Ascending aorta (tissue), 2 donors: ENCODE measurements at regions of chr7 and their contacts with region 1.

Region 1: GRCh38 chr7:141737834-141738591 is at the start of gene SSBP1:
- DNase-seq: peak; percentile 59 to 95
- H3K4me3 ChIP-seq: peak within 1 kb of the TSS; percentile 70 to 73
- H3K27ac ChIP-seq: peak within 1 kb of the TSS; percentile 70 to 81
- H3K4me1 ChIP-seq: peaks cover 2 to 10% of the 10 kb centered on the region in 2 donors
- H3K27me3 ChIP-seq: no peaks in the 10 kb centered on the region
- CTCF ChIP-seq: peak; percentile 74 to 79 (median 76)
- total RNA-seq, gene SSBP1: 19.2 TPM

Region 2: GRCh38 chr7:141551094-141551781 is 186.8 kb before region 1 on chr7 and contains the start of gene AGK:
- intact Hi-C with region 1: loop called (anchors 5 kb)
- DNase-seq: peak in 1 of 2 donors; percentile 73
- H3K4me3 ChIP-seq: peak within 1 kb of the TSS; percentile 91 to 92
- H3K27ac ChIP-seq: peak within 1 kb of the TSS; percentile 63 to 77
- H3K4me1 ChIP-seq: peaks cover 0 to 6% of the 10 kb centered on the region in 2 donors
- H3K27me3 ChIP-seq: no peaks in the 10 kb centered on the region
- CTCF ChIP-seq: no peak
- total RNA-seq, gene AGK: 16.1 TPM

Region 3: GRCh38 chr7:141630621-141631020 is 107.4 kb before region 1 on chr7:
- intact Hi-C with region 1: no loop called
- DNase-seq: no peak
- H3K4me3 ChIP-seq: no peak overlapping the region
- H3K27ac ChIP-seq: no peak overlapping the region
- H3K4me1 ChIP-seq: no peaks in the 10 kb centered on the region
- H3K27me3 ChIP-seq: no peaks in the 10 kb centered on the region
- CTCF ChIP-seq: no peak

Region 4: DNA sequence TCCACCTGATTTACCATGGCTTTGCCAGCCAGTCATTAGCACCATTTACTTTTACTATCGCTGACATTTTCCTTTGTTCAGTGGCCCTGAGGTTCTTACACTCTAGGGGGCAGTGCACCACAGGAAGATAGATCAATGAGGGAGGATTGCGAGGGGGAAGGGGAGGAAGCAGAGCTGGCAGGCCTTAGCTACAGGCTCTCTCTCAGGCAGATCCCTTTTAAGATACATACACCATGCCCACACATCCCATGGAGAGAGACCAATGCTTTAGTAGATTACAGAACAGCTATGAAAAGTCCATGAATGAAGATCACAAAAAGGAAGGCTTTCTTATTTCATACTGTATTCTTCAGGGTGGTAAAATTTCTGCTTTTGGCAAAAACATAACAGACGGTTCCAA is 83.5 kb before region 1 on chr7:
- intact Hi-C with region 1: loop called (anchors 2 kb)
- DNase-seq: peak; percentile 24 to 80
- H3K4me3 ChIP-seq: no peak overlapping the region
- H3K27ac ChIP-seq: peak overlapping the region in 1 of 2 donors; percentile 13
- H3K4me1 ChIP-seq: peaks cover 0 to 5% of the 10 kb centered on the region in 2 donors
- H3K27me3 ChIP-seq: no peaks in the 10 kb centered on the region
- CTCF ChIP-seq: peak; percentile 46 to 67 (median 51)

Region 5: DNA sequence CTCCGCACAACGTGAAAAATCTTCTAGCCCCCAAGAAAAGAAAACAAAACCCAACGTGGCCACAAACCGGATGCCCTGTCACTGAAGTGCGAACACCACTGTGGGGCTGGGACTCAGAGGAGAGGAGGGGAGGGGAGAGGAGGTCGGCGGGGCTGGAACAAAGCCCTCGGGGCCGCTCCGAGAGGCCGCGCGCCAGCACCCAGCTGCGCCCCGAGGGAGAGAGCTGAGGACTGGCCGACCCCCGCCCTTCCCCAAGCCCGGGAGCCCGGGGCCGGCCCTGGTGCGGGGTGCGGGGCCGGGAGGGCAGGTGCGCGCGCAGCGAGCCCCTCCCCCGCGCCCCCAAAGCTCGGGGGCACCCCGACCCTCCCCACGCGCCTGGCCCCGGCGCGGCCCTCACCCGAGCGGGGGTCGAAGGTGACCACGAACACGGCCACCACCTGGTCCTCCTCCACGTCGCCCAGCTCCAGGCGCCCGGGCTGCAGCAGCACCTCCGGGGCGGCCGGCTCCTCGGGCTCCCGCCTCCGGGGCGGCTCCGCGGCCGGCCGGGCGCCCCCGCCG is 36.4 kb before region 1 on chr7:
- intact Hi-C with region 1: loop called (anchors 2 kb)
- DNase-seq: peak in 1 of 2 donors; percentile 71
- H3K4me3 ChIP-seq: peak overlapping the region; percentile 84 to 99
- H3K27ac ChIP-seq: peak overlapping the region; percentile 82 to 97
- H3K4me1 ChIP-seq: peaks cover 0 to 13% of the 10 kb centered on the region in 2 donors
- H3K27me3 ChIP-seq: no peaks in the 10 kb centered on the region
- CTCF ChIP-seq: no peak